ENCODE measurements at regions of chr19 and their contacts with region 1.

Region 1: GRCh38 chr19:34416021-34416545 is 11.9 kb downstream of the PDCD2L start:
- DNase-seq: no peak
- ATAC-seq: no peak
- H3K4me3 Mint-ChIP-seq: no peak overlapping the region
- H3K27ac Mint-ChIP-seq: peak overlapping the region; percentile 15
- H3K4me1 Mint-ChIP-seq: peaks cover 8% of the 10 kb centered on the region
- H3K27me3 Mint-ChIP-seq: no peaks in the 10 kb centered on the region
- CTCF ChIP-seq: no peak

Region 2: DNA sequence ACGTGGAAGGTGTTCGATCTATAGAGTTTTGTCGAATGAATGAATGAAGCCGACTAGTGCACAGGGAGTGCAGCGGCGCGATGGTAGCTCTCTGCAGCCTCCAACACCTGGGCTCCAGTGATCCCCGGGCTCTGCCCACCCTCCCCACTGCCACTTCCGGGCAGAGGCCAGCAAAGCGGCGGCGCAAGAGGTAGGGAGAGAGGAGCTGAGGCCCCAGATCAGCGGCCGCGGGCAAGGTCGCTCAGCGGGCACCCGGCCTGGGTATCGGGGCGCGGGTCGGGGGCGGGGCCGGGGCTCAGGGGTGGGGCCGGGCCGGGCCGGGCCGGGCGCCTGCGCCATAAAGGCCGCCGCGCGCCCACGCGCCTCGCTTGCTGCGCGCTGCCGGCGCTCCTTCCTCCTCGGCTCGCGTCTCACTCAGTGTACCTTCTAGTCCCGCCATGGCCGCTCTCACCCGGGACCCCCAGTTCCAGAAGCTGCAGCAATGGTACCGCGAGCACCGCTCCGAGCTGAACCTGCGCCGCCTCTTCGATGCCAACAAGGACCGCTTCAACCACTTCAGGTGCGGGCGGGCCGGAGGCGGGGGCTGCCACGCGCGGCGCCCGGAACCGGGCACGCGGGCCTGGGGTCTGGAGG is 51.1 kb before region 1 on chr19 and contains the start of gene GPI:
- CTCF ChIA-PET with region 1: no interaction called
- POLR2A ChIA-PET with region 1: no interaction called
- intact Hi-C with region 1: no loop called
- DNase-seq: peak; percentile 77
- ATAC-seq: peak; percentile 88
- H3K4me3 Mint-ChIP-seq: peak within 1 kb of the TSS; percentile 100
- H3K27ac Mint-ChIP-seq: peak within 1 kb of the TSS; percentile 93
- H3K4me1 Mint-ChIP-seq: peaks cover 57% of the 10 kb centered on the region
- H3K27me3 Mint-ChIP-seq: no peaks in the 10 kb centered on the region
- CTCF ChIP-seq: no peak
- total RNA-seq, gene GPI: 847 to 870 TPM

Region 3: DNA sequence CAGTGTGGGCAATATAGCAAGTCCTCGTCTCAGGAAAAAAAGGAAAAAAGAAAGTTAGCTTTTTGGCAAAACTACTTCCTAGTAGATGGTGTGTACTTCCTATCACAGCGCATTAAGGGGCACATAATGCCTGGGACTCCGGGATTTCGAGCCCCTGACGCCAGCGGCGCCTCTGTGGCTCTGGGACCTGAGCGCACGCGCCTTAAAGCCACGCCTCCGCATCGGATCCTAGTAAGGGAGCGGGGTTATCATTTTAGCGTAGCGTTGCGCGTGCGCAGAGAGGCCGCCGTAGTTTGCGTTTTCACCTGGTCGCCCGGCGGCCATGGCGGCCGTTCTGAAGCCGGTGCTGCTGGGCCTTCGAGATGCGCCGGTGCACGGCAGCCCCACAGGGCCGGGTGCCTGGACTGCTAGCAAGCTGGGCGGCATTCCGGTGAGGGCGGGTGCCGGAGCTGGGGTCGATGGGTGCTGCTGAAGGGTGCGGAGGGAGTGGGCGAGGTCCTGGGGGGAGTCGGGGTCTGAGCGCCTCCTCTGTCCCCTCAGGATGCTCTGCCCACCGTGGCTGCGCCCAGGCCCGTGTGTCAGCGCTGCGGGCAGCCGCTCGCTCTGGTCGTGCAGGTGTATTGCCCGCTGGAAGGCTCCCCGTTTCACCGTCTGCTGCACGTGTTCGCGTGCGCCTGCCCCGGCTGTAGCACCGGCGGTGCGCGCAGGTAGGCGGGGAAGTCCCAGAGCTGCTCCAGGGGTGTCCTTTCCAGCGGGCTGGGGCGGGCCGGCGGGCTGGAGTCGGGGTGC is 11.8 kb before region 1 on chr19 and contains the start of gene PDCD2L:
- CTCF ChIA-PET with region 1: interaction called, 4 read pairs
- POLR2A ChIA-PET with region 1: interaction called, 17 read pairs
- intact Hi-C with region 1: no loop called
- DNase-seq: peak; percentile 98
- ATAC-seq: peak; percentile 95
- H3K4me3 Mint-ChIP-seq: peak within 1 kb of the TSS; percentile 87
- H3K27ac Mint-ChIP-seq: peak within 1 kb of the TSS; percentile 88
- H3K4me1 Mint-ChIP-seq: peaks cover 15% of the 10 kb centered on the region
- H3K27me3 Mint-ChIP-seq: no peaks in the 10 kb centered on the region
- CTCF ChIP-seq: no peak
- total RNA-seq, gene PDCD2L: 39.9 to 42.1 TPM

Measured in activated CD8-positive, alpha-beta T cell treated with anti-CD3 and anti-CD28 coated beads for 36 hours (primary cell).